IMR-90 (cell line): ENCODE measurements at regions of chr6 and their contacts with region 1.

Region 1: DNA sequence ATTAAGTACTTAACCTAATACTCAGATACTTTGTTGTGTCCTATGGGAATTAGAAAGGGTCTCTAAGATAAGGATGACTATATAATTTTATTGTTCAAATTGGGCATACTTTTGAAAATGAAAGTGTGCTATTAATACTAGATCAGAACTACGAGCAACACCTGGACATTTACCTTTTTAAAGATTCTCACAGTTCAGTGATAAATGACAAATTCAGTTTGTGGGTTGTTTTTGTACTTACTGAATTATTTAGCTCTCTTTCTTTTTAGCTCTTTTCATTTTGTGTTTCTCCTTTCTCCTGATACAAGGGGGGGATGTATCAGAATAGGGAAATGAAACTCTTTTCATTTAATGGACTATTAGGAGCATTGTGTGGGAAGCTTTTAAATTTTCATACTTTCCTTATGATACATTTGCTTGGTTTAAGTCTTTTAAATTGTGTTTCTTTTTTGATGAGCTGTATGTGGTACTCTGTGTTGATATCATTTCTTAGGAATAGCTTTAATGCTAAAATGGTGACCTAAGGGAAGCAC is 47.5 kb downstream of the PHF3 start:
- DNase-seq: no peak
- ATAC-seq: no peak
- H3K4me3 ChIP-seq: no peak overlapping the region
- H3K27ac ChIP-seq: no peak overlapping the region
- H3K4me1 ChIP-seq: no peaks in the 10 kb centered on the region
- H3K27me3 ChIP-seq: no peaks in the 10 kb centered on the region
- CTCF ChIP-seq: no peak
- POLR2A ChIP-seq: no peak
- RAD21 ChIP-seq: no peak

Region 2: DNA sequence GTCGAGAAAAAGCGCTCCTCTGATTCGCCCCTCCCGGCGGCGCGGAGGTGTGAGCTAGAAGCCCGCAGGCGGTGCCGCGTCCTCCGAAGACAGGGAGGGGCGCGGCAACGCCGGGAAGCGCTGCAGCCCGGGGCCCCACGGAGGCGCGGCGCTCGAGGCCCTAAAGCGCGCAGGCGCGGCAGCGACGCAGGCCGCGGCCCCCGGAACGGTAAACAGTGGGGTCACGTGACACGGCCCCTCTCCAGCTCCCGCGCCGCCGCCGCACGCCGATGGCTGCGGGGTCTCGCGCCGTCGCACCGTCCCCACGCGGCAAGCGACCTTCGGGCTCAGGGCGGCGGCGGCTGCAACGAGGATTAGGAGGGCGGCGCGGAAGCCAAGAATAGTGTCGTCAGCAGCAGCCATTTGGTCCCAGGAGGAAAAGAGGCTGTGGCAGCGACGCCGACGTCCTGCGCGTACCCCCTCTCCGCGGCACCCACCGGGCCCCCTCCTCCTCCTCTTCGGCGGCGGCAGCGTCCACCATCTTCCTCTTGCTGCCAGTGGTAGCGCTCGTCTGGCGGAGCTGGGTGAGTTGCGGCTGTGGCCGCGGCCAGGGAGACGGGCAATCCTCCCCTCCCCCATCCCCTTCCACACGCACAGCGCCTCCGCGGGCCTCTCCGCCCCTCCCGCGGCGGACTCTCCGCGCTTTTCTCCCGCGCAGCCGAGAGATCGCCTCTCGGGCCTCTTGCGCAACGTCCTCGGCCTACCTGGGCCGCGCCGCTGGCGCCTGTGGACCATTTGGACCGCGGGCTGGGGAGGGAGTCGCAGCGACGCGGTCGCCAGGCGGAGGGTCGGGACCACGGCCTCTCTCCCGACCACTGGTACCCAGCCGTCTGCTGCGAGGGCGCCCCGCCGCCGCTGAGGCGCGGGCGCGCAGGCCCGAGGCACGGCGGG is 47.3 kb before region 1 on chr6 and contains the start of gene PHF3:
- CTCF ChIA-PET with region 1: interaction called, 3 read pairs
- POLR2A ChIA-PET with region 1: interaction called, 3 read pairs
- dilution Hi-C with region 1: no loop called
- in situ Hi-C with region 1: no loop called
- intact Hi-C with region 1: loop called (anchors 5 kb)
- DNase-seq: peak; percentile 84
- ATAC-seq: peak; percentile 92
- H3K4me3 ChIP-seq: peak within 1 kb of the TSS; percentile 95
- H3K27ac ChIP-seq: peak within 1 kb of the TSS; percentile 85
- H3K4me1 ChIP-seq: no peaks in the 10 kb centered on the region; the same call in 1 of the 2 replicates
- H3K27me3 ChIP-seq: peaks cover 3% of the 10 kb centered on the region
- CTCF ChIP-seq: 0 out of 2 replicates have a peak, but pooled peaks have one; percentile 7
- POLR2A ChIP-seq: peak; percentile 78
- RAD21 ChIP-seq: no peak
- total RNA-seq, gene PHF3: 27.8 and 46.9 TPM in 2 replicates